Activated B cell treated with CpG ODN at 0.5 μM for 24 hours (primary cell): ENCODE measurements at regions of chr1 and their contacts with region 1.

Region 1: DNA sequence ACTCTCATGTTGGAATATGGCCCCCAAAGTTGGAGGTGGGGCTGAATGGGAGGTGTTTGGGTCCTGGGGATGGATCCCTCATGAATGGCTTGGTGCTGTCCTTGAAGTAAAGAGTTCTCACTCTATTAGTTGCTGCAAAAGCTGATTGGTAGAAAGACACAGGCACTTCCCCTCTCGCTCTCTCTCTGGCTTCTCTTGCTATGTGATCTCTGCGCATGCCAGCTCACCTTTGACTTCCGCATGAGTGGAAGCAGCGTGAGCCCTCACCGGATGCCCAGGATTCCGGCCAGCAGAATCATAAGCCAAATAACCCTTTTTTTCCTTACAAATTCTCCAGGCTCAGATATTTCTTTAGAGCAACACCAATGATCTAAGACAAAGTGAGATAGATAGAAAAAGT is 20.9 kb upstream of the CCSAP start:
- DNase-seq: no peak
- ATAC-seq: no peak
- H3K4me3 Mint-ChIP-seq: no peak overlapping the region
- H3K27ac Mint-ChIP-seq: no peak overlapping the region
- H3K4me1 Mint-ChIP-seq: no peaks in the 10 kb centered on the region
- H3K27me3 Mint-ChIP-seq: peaks cover 33% of the 10 kb centered on the region
- CTCF ChIP-seq: no peak

Region 2: DNA sequence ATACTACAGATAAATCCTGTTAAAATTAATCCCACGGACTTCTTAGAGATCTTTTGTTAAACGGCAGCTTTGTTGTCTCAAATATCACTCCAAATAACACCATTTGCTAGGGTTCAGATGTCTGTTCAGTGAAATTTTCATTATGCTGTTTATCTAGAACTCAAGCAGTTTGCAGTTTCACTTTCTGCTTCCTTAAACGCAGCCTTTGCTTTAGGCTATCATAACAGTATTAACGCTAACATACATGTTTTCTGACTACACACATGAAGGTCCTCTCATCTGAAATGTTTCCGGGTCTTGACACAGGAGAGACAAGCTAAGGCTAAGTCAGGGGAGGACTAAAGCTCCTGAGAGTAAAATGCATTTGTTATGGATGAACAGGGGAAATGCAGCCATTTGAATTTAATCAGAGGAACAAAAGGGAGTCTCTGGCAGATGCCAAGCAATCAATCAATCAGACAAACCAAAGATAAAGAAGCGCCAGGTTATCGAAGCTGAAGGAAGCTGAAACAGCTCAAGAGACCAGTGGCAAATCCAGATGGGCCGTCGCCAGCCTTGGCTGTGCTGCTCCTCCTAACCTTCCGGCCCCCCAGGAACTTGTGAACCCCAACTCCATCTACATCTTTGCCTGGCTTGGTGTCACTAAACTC is 37.7 kb before region 1 on chr1:
- CTCF ChIA-PET with region 1: no interaction called
- POLR2A ChIA-PET with region 1: no interaction called
- intact Hi-C with region 1: loop called (anchors 2 kb)
- DNase-seq: no peak
- ATAC-seq: peak; percentile 33
- H3K4me3 Mint-ChIP-seq: peak overlapping the region; percentile 33
- H3K27ac Mint-ChIP-seq: peak overlapping the region; percentile 62
- H3K4me1 Mint-ChIP-seq: peaks cover 44% of the 10 kb centered on the region
- H3K27me3 Mint-ChIP-seq: no peaks in the 10 kb centered on the region
- CTCF ChIP-seq: no peak

Region 3: DNA sequence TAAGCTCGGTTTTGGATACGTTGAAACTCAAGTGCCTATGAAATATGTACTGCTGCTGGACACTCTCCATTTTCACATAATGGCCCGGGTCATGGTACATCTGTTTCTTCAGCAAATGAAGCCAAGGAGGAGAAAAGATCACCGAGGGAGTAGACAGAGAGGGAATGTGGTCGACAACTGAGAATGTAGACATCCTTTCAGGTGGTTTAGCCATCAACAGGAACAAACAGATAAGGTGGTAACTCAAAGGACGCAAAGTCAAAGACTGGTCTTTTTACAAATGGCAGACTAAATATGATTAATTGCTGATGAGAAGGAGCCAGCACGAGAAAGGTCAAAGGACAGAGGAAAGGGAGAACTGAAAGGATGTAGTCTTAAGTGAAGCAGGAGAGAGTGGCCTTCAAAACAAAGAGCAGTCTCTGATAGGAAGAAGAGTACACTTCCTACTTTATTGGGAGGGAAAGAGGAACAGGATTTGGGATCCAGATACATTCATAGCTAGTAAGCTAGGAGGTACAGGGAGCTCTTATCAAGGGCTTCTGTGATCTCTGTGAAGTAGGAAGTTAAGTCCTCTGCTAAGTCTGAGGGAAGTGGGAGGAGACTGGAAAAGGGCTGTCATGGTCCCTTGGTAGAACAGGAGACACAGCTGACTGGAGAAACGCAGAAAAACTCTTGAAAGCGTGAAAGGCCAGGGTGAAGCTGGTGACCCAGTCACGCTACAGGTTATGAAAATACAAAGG is 116.1 kb after region 1 on chr1:
- CTCF ChIA-PET with region 1: no interaction called
- POLR2A ChIA-PET with region 1: no interaction called
- intact Hi-C with region 1: no loop called
- DNase-seq: peak; percentile 25
- ATAC-seq: peak; percentile 85
- H3K4me3 Mint-ChIP-seq: peak overlapping the region; percentile 33
- H3K27ac Mint-ChIP-seq: peak overlapping the region; percentile 89
- H3K4me1 Mint-ChIP-seq: peaks cover 46% of the 10 kb centered on the region
- H3K27me3 Mint-ChIP-seq: no peaks in the 10 kb centered on the region
- CTCF ChIP-seq: no peak